CD8-positive, alpha-beta memory T cell (primary cell): ENCODE measurements at regions of chr1 and their contacts with region 1.

Region 1: GRCh38 chr1:26431979-26432695 is at the start of gene DHDDS:
- DNase-seq: peak; percentile 96 to 98 (median 97)
- H3K4me3 ChIP-seq: peak within 1 kb of the TSS; percentile 69
- H3K4me3 Mint-ChIP-seq: peak within 1 kb of the TSS; percentile 90 to 98 (median 94)
- H3K27ac ChIP-seq: peak within 1 kb of the TSS; percentile 70
- H3K27ac Mint-ChIP-seq: peak within 1 kb of the TSS; percentile 75 to 99 (median 96)
- H3K4me1 ChIP-seq: peaks cover 19% of the 10 kb centered on the region
- H3K4me1 Mint-ChIP-seq: peaks cover 19 to 24% (median 24%) of the 10 kb centered on the region in 3 donors
- H3K27me3 ChIP-seq: no peaks in the 10 kb centered on the region
- H3K27me3 Mint-ChIP-seq: peaks cover 0 to 6% of the 10 kb centered on the region in 2 donors
- total RNA-seq, gene DHDDS: 47.9 to 52.2 TPM

Region 2: GRCh38 chr1:25936947-25937346 is 495.2 kb before region 1 on chr1:
- CTCF ChIA-PET with region 1: no interaction called
- POLR2A ChIA-PET with region 1: no interaction called
- DNase-seq: no peak
- H3K4me3 ChIP-seq: no peak overlapping the region
- H3K4me3 Mint-ChIP-seq: no peak overlapping the region
- H3K27ac ChIP-seq: no peak overlapping the region
- H3K27ac Mint-ChIP-seq: peak overlapping the region in 1 of 8 donors; percentile 50
- H3K4me1 ChIP-seq: no peaks in the 10 kb centered on the region
- H3K4me1 Mint-ChIP-seq: no peaks in the 10 kb centered on the region
- H3K27me3 ChIP-seq: no peaks in the 10 kb centered on the region
- H3K27me3 Mint-ChIP-seq: peaks cover 0 to 5% of the 10 kb centered on the region in 2 donors

Region 3: DNA sequence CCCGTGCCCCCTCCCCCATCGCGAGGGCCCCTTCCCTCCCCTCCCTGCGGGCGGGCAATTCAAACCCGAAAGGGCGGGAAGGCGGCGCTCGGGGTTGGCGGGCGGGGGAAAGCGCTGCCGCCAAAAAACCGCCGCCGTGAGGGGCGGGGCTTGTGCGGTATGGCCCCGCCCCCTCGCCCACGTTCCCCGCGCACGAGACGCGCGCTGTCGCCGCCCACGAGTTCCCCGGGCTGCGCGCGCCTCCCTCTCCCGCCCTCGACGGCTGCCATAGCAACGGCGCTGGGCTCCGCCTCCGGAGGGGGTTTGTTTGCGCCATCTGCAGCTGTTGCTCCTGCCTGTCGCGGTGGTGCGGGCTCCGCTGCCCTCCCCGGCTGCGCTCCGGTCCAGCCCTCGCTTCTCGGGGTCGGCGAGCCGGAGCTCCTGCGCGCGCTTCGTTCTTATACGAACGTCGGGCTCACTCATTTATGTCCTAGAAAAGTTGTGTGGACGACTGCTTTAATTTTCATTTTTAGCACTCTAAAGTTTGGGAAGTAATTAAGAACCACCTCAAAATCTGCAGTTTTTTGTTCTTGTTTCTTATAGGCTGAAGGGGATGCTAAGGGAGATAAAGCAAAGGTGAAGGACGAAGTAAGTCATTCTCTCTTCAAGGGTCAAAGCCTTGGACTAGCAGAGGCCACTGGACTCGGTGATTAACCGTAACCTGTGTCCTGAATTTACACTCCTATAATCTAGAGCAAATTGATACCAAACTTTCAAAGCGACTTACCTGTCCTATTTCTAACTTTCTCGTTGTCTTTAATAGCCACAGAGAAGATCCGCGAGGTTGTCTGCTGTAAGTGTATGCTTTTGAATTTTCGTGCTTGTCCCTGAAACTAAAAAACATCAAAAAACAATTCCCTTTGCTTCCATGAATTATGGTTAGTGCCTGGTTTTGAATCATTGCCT is 41.0 kb after region 1 on chr1:
- CTCF ChIA-PET with region 1: interaction called, 8 read pairs
- POLR2A ChIA-PET with region 1: interaction called, 17 read pairs
- DNase-seq: peak; percentile 96 to 97 (median 96)
- H3K4me3 ChIP-seq: peak overlapping the region; percentile 58
- H3K4me3 Mint-ChIP-seq: peak overlapping the region; percentile 86 to 100 (median 89)
- H3K27ac ChIP-seq: peak overlapping the region; percentile 92
- H3K27ac Mint-ChIP-seq: peak overlapping the region; percentile 87 to 99 (median 90)
- H3K4me1 ChIP-seq: peaks cover 34% of the 10 kb centered on the region
- H3K4me1 Mint-ChIP-seq: peaks cover 50 to 61% (median 52%) of the 10 kb centered on the region in 3 donors
- H3K27me3 ChIP-seq: no peaks in the 10 kb centered on the region
- H3K27me3 Mint-ChIP-seq: no peaks in the 10 kb centered on the region